Caco-2 (cell line): ENCODE measurements at regions of chr12 and their contacts with region 1.

Region 1: GRCh38 chr12:48851883-48852733 is at the start of gene DDX23:
- DNase-seq: peak; percentile 97
- H3K4me3 ChIP-seq: peak within 1 kb of the TSS; percentile 75
- H3K4me3 Mint-ChIP-seq: peak within 1 kb of the TSS; percentile 99
- H3K27ac Mint-ChIP-seq: peak within 1 kb of the TSS; percentile 99
- H3K4me1 ChIP-seq: peaks cover 8% of the 10 kb centered on the region
- H3K4me1 Mint-ChIP-seq: peaks cover 25% of the 10 kb centered on the region
- H3K27me3 ChIP-seq: no peaks in the 10 kb centered on the region
- H3K27me3 Mint-ChIP-seq: no peaks in the 10 kb centered on the region
- CTCF ChIP-seq: no peak
- total RNA-seq, gene DDX23: 151 and 152 TPM in 2 replicates

Region 2: GRCh38 chr12:48388430-48388829 is 463.7 kb before region 1 on chr12:
- CTCF ChIA-PET with region 1: no interaction called
- POLR2A ChIA-PET with region 1: no interaction called
- intact Hi-C with region 1: no loop called
- DNase-seq: no peak
- H3K4me3 ChIP-seq: no peak overlapping the region
- H3K4me3 Mint-ChIP-seq: no peak overlapping the region
- H3K27ac Mint-ChIP-seq: no peak overlapping the region
- H3K4me1 ChIP-seq: no peaks in the 10 kb centered on the region
- H3K4me1 Mint-ChIP-seq: no peaks in the 10 kb centered on the region
- H3K27me3 ChIP-seq: peaks cover 1% of the 10 kb centered on the region
- H3K27me3 Mint-ChIP-seq: peaks cover 16% of the 10 kb centered on the region
- CTCF ChIP-seq: no peak

Region 3: DNA sequence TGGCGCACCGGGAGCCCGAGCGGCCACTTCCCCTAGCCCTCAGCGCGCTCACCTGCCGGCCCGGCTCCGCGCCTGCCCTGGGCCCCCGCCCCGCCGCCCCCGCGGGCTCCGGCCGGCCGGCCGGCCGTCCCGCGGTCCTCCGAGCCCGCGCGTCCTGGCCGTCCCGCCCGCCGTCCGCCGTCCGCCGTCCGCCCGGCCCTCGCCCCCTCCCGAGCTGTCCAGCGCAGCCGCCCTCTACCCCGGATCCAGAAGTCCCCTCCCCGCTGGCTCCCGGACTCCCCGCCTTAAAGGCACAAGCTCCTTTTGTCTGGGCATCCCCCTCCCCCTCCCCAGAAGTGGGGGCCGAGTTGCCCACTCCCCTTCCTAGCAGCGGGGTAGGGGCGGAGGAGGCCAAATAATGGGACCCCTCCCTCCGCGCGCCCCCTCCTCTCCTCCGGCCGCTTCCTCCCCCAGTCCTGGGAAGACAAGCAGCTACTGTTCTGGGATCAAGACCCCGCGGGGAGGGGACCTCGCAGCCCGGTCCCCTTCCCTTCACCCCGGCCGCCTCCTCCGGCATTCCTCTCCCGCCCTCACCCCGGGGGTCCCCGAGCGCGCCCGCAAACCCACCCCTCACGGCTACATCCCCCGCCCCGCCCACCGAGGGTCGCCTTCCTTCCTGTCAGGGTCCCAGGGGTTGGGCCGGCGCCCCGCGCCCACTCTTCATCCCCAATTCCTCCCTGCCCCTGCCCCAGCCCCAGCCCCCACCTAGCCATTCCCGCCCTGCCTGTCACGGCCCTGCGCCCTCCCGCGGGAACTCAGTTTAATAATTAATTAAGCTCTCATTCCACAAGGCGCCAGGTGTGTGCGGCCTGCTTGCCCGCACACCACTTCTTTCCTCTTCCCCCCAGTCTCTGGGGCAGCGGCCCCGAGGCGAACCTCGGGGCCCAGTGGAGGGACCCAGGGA is 63.0 kb before region 1 on chr12 and contains the start of gene ADCY6:
- CTCF ChIA-PET with region 1: interaction called, 10 read pairs
- POLR2A ChIA-PET with region 1: interaction called, 19 read pairs
- intact Hi-C with region 1: no loop called
- DNase-seq: peak; percentile 94
- H3K4me3 ChIP-seq: peak within 1 kb of the TSS; percentile 88
- H3K4me3 Mint-ChIP-seq: peak within 1 kb of the TSS; percentile 84
- H3K27ac Mint-ChIP-seq: peak within 1 kb of the TSS; percentile 91
- H3K4me1 ChIP-seq: peaks cover 29% of the 10 kb centered on the region
- H3K4me1 Mint-ChIP-seq: peaks cover 13% of the 10 kb centered on the region
- H3K27me3 ChIP-seq: no peaks in the 10 kb centered on the region
- H3K27me3 Mint-ChIP-seq: no peaks in the 10 kb centered on the region
- CTCF ChIP-seq: no peak
- total RNA-seq, gene ADCY6: 89.8 and 92.9 TPM in 2 replicates

Region 4: GRCh38 chr12:48873096-48873495 is 21.0 kb after region 1 on chr12:
- CTCF ChIA-PET with region 1: interaction called, 15 read pairs
- POLR2A ChIA-PET with region 1: interaction called, 4 read pairs
- intact Hi-C with region 1: no loop called
- DNase-seq: no peak
- H3K4me3 ChIP-seq: no peak overlapping the region
- H3K4me3 Mint-ChIP-seq: no peak overlapping the region
- H3K27ac Mint-ChIP-seq: no peak overlapping the region
- H3K4me1 ChIP-seq: peaks cover 6% of the 10 kb centered on the region
- H3K4me1 Mint-ChIP-seq: peaks cover 6% of the 10 kb centered on the region
- H3K27me3 ChIP-seq: no peaks in the 10 kb centered on the region
- H3K27me3 Mint-ChIP-seq: no peaks in the 10 kb centered on the region
- CTCF ChIP-seq: no peak

Region 5: DNA sequence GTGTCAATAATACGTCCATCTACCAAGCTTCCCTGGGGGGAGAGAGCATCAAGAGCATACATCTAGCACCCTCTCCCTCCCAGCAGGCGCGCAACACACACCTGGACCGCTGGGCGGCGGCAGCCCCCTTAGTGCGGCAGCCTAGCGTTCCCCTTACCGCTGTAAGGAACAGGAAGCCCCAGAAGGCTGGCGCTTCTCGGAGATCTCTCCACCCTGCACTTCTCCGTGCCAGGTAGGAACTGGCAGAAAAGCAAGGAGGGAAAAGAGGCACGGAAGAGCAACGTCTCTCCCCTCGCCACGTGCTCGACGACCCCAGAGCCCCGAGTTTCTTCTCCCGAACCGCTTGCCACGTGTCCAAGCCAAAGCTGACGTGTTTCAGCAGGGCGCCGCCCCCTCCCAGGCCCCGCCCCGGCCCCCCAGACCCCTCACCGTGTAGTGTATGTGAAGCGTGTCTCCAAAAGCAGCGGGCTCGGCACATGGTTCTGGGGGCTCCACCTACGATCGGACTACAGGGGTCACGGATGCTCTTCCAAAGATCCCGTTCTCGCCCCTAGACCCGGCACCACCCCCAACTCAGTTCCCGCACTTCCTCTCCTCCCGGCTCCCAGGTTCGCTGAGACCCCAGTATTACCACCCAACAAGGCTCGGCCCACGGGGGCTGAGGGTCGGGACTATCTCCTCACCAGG is 72.7 kb after region 1 on chr12:
- CTCF ChIA-PET with region 1: interaction called, 34 read pairs
- POLR2A ChIA-PET with region 1: interaction called, 5 read pairs
- intact Hi-C with region 1: loop called (anchors 1 kb)
- DNase-seq: peak; percentile 81 to 85
- H3K4me3 ChIP-seq: peak overlapping the region; percentile 73
- H3K4me3 Mint-ChIP-seq: peak overlapping the region; percentile 83
- H3K27ac Mint-ChIP-seq: peak overlapping the region; percentile 76
- H3K4me1 ChIP-seq: peaks cover 5% of the 10 kb centered on the region; the same call in 1 of the 2 replicates
- H3K4me1 Mint-ChIP-seq: no peaks in the 10 kb centered on the region
- H3K27me3 ChIP-seq: no peaks in the 10 kb centered on the region
- H3K27me3 Mint-ChIP-seq: no peaks in the 10 kb centered on the region
- CTCF ChIP-seq: peak; percentile 72 to 96

Region 6: GRCh38 chr12:48977315-48978281 is 125.5 kb after region 1 on chr12:
- CTCF ChIA-PET with region 1: interaction called, 13 read pairs
- POLR2A ChIA-PET with region 1: no interaction called
- intact Hi-C with region 1: loop called (anchors 2 kb)
- DNase-seq: peak; percentile 61 to 86
- H3K4me3 ChIP-seq: peak overlapping the region; percentile 48
- H3K4me3 Mint-ChIP-seq: peak overlapping the region; percentile 0
- H3K27ac Mint-ChIP-seq: no peak overlapping the region
- H3K4me1 ChIP-seq: peaks cover 23% of the 10 kb centered on the region
- H3K4me1 Mint-ChIP-seq: peaks cover 17% of the 10 kb centered on the region
- H3K27me3 ChIP-seq: peaks cover 14% of the 10 kb centered on the region
- H3K27me3 Mint-ChIP-seq: peaks cover 23% of the 10 kb centered on the region
- CTCF ChIP-seq: peak; percentile 79 to 91

Region 7: DNA sequence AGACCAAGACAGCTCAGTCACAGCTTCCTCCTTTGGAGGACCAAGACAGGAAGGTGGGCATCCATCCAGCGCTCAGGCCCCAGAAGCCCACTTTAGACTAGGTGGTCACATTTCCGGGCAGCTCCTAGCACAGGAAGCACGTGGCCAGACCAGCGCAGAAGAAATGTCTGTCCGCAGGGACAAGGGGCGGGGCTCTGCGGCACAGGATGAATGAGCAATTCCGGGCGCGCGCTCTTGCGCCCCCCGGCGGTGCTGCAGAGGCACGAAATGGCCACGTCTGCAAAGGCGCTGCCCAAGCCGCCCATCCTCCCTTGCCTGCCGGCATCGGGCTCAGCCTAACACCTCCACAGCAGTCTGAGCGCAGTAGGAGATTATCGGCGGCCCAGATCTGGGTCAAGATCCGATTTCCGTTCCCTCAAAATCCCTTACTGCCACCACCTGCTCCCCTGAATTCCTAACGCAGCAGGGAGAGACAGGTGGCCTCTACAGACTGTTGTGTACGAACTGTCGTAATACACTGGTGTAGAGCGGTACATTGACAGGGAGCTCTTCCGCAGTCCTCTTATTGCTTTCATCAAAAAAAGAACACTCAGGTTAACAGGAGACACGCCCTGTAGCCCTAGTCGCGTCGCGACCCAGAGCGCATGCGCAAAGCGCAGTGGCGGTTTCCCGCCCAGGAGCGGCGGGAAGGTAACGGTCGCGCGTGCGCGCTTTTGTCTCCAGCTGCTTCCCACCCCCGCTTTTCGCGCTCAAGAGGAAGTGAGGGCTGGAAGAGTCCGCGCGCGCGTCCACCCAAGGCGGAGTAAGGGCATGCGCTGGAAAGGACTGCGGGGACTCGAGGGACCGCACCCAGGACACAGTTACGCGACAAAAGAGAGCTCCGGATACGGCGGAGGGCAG is 278.3 kb after region 1 on chr12:
- CTCF ChIA-PET with region 1: no interaction called
- POLR2A ChIA-PET with region 1: interaction called, 11 read pairs
- intact Hi-C with region 1: no loop called
- DNase-seq: peak; percentile 94 to 96
- H3K4me3 ChIP-seq: peak overlapping the region; percentile 88
- H3K4me3 Mint-ChIP-seq: peak overlapping the region; percentile 74
- H3K27ac Mint-ChIP-seq: peak overlapping the region; percentile 99
- H3K4me1 ChIP-seq: peaks cover 8% of the 10 kb centered on the region
- H3K4me1 Mint-ChIP-seq: peaks cover 10% of the 10 kb centered on the region
- H3K27me3 ChIP-seq: no peaks in the 10 kb centered on the region
- H3K27me3 Mint-ChIP-seq: no peaks in the 10 kb centered on the region
- CTCF ChIP-seq: peak; percentile 92 to 95